ENCODE measurements at regions of chr1 and their contacts with region 1.

Region 1: GRCh38 chr1:60835649-60836048 is 246.7 kb upstream of the NFIA start:
- DNase-seq: no peak
- ATAC-seq: no peak
- H3K4me3 ChIP-seq: no peak overlapping the region
- H3K4me3 Mint-ChIP-seq: no peak overlapping the region
- H3K27ac ChIP-seq: no peak overlapping the region
- H3K27ac Mint-ChIP-seq: no peak overlapping the region
- H3K4me1 ChIP-seq: peaks cover 7 to 17% of the 10 kb centered on the region in 2 experiments
- H3K4me1 Mint-ChIP-seq: peaks cover 0 to 1% (median 0%) of the 10 kb centered on the region in 3 donors
- H3K27me3 ChIP-seq: peaks cover 0 to 2% of the 10 kb centered on the region in 2 experiments
- H3K27me3 Mint-ChIP-seq: peaks cover 13 to 28% of the 10 kb centered on the region in 2 donors

Region 2: DNA sequence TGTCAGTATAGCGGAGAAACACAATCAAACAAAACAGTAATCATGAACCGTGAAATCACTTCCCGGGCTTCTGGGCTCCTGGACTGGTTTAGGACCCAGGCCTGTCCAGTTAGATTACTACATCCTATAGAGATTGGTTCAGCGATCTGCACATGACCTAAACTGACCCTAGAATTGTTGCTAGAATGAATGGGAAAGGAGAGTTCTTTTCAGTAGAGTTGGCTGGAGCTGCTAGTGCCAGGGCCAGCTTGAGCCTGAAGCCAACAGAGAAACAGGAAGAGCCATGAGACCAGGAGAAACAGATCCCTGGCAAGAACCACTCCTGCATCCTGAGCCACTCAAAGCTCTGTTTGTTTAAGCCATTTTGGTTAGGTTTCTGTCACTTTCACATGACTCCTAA is 287.8 kb before region 1 on chr1:
- CTCF ChIA-PET with region 1: no interaction called
- POLR2A ChIA-PET with region 1: no interaction called
- DNase-seq: no peak
- ATAC-seq: no peak
- H3K4me3 ChIP-seq: no peak overlapping the region
- H3K4me3 Mint-ChIP-seq: no peak overlapping the region
- H3K27ac ChIP-seq: no peak overlapping the region
- H3K27ac Mint-ChIP-seq: no peak overlapping the region
- H3K4me1 ChIP-seq: no peaks in the 10 kb centered on the region
- H3K4me1 Mint-ChIP-seq: no peaks in the 10 kb centered on the region
- H3K27me3 ChIP-seq: no peaks in the 10 kb centered on the region
- H3K27me3 Mint-ChIP-seq: no peaks in the 10 kb centered on the region

Region 3: GRCh38 chr1:61138921-61139774 is 303.5 kb after region 1 on chr1:
- CTCF ChIA-PET with region 1: interaction called in 1 of 2 experiments, 13 read pairs
- POLR2A ChIA-PET with region 1: no interaction called
- DNase-seq: no peak
- ATAC-seq: no peak
- H3K4me3 ChIP-seq: no peak overlapping the region
- H3K4me3 Mint-ChIP-seq: no peak overlapping the region
- H3K27ac ChIP-seq: no peak overlapping the region
- H3K27ac Mint-ChIP-seq: no peak overlapping the region
- H3K4me1 ChIP-seq: no peaks in the 10 kb centered on the region
- H3K4me1 Mint-ChIP-seq: no peaks in the 10 kb centered on the region
- H3K27me3 ChIP-seq: no peaks in the 10 kb centered on the region
- H3K27me3 Mint-ChIP-seq: peaks cover 0 to 2% of the 10 kb centered on the region in 2 donors